WTC11 (cell line): ENCODE measurements at regions of chr15 and their contacts with region 1.

Region 1: DNA sequence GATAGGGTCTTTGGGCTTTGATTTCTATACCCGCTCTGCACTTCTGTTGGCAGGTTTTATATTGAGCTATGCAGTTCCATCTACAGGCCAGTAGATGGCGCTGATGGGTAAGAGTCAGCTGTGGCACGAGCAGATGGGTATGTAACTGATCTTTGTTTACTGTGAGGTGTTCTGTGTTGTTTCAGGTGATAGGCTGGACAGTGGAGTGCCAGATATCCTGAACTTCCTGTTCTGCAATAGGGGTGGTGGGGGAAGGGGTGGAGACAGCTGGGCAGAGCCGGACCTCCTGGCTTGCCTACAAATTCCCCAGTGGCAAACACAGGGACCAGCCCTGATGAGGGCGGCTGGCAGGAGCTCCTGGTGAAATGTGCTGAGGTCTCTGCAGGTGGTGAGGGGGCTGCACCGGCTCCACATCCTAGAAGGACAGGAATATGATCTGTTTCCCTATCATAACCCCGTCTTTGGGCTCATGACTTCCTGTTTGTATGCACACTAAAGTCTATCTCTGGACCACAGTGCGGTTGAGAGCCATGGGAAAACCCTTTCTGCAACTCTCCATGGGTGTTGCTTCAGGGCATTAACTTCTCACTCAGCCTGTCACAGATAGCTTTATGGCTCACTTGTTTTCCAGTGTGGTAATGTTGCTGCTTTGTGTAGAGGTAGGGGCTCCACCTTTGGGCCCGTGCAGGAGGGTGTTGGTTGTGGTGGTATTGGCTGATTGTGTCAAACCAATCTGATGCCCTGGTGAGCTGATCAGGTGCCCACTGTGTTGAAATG is 13.4 kb upstream of the FAM98B start:
- DNase-seq: peak; percentile 27
- ATAC-seq: peak; percentile 96
- H3K4me3 Mint-ChIP-seq: 0 out of 2 replicates have a peak overlapping the region, but pooled peaks have one; percentile 22
- H3K27ac Mint-ChIP-seq: no peak overlapping the region
- H3K4me1 Mint-ChIP-seq: peaks cover 7% of the 10 kb centered on the region; the same call in 1 of the 2 replicates
- H3K27me3 Mint-ChIP-seq: peaks cover 3% of the 10 kb centered on the region; the same call in 1 of the 2 replicates
- CTCF ChIP-seq: peak; percentile 91

Region 2: DNA sequence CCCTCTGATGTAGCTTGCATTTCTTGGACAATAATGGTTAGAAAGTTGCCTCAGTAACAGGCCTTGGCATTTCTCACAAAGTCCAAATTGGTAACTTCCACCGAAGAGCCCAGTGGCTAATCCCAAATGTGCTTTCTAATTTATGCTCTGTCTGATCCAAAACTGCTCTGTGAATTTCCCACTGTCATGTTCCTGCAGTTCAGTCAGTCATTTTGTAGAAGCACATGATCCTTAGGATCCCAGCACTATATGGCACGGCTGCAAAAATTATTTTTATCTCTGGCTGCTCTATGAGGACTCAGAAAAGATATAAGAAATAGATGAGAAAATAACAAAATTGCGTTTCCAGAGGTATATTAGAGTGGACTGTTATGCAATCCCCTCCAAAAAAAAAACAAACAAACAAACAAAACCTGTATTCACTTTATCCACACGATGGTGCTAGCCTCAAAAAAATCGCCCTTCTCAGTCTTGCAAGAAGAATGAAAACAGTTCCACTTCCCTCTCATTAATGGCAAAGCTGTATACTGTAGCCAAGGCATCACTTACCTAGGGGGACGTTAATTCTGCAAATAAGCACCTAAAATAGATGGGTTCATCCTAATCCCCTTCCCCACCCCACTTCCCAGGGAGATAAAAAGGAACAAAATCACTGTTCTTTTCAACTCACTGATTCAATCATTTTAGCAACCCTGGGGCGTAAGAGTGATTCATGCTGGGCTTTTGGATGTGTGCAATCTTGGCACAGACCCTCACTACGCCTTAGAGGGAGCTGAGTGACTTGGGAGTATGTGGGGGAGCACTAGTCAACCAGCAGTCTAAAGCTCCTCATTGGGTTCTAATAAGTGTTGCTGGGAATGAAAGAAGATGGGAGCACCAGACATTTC is 444.8 kb before region 1 on chr15:
- CTCF ChIA-PET with region 1: interaction called, 38 read pairs
- POLR2A ChIA-PET with region 1: no interaction called
- DNase-seq: no peak
- ATAC-seq: peak; percentile 85
- H3K4me3 Mint-ChIP-seq: no peak overlapping the region
- H3K27ac Mint-ChIP-seq: no peak overlapping the region
- H3K4me1 Mint-ChIP-seq: no peaks in the 10 kb centered on the region
- H3K27me3 Mint-ChIP-seq: no peaks in the 10 kb centered on the region
- CTCF ChIP-seq: peak; percentile 29

Region 3: DNA sequence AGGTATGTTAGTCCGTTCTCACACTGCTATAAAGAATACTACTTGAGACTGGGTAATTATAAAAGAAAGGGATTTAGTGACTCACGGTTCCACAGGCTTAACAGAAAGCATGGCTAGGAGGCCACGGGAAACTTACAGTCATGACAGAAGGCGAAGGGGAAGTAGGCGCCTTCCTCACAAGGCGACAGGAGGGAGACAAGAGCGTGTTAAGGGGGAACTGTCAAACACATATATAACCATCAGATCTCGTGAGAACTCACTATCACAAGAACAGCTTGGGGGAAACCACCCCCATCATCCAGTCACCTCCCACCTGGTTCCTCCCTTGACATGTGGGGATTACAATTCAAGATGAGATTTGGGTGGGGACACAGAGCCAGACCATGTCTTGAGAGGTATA is 157.5 kb before region 1 on chr15:
- CTCF ChIA-PET with region 1: no interaction called
- POLR2A ChIA-PET with region 1: no interaction called
- DNase-seq: no peak
- ATAC-seq: no peak; the same call in 1 of the 2 replicates
- H3K4me3 Mint-ChIP-seq: no peak overlapping the region
- H3K27ac Mint-ChIP-seq: no peak overlapping the region
- H3K4me1 Mint-ChIP-seq: peaks cover 50% of the 10 kb centered on the region
- H3K27me3 Mint-ChIP-seq: no peaks in the 10 kb centered on the region
- CTCF ChIP-seq: no peak

Region 4: DNA sequence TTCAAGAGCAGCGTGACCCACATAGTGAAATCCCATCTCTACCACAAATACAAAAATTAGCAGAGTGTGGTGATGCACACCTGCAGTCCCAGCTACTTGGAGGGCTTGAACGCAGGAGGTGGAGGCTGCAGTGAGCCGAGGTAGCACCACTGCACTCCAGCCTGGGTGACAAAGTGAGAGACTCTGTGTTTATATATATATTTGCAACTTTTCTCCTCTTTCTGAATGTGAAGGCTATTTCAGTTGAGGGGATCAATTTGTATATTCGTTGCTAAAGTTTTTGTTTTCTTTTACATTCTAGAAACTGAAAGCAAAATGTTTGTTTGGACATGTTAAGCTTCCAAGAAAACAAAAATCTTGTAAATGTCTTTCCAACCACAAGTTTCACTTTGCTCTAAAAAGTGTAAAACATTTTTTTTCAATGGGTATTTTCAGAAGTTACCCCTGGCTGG is 16.4 kb before region 1 on chr15:
- CTCF ChIA-PET with region 1: interaction called, 34 read pairs
- POLR2A ChIA-PET with region 1: no interaction called
- DNase-seq: no peak
- ATAC-seq: no peak
- H3K4me3 Mint-ChIP-seq: no peak overlapping the region
- H3K27ac Mint-ChIP-seq: no peak overlapping the region
- H3K4me1 Mint-ChIP-seq: no peaks in the 10 kb centered on the region
- H3K27me3 Mint-ChIP-seq: no peaks in the 10 kb centered on the region
- CTCF ChIP-seq: no peak

Region 5: DNA sequence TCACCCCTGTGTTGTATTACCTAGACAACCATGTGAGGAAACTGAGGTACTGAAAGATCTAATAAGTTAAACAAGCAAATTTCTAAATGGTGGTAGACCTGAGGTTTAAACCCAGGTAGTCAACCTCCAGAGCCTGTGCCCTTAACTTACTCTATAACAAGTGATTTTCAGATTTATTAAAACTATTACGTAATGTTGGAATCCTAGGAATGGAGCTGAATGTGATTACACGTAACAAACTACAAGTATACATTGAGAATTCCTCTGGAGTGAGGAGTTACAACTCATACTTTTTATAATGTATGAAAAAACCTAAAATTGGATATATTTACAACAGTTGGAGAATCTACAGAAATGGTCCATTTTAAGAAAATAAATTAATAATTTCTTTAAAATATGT is 31.4 kb after region 1 on chr15:
- CTCF ChIA-PET with region 1: interaction called, 11 read pairs
- POLR2A ChIA-PET with region 1: no interaction called
- DNase-seq: no peak
- ATAC-seq: no peak
- H3K4me3 Mint-ChIP-seq: no peak overlapping the region
- H3K27ac Mint-ChIP-seq: no peak overlapping the region
- H3K4me1 Mint-ChIP-seq: no peaks in the 10 kb centered on the region
- H3K27me3 Mint-ChIP-seq: no peaks in the 10 kb centered on the region
- CTCF ChIP-seq: no peak

Region 6: DNA sequence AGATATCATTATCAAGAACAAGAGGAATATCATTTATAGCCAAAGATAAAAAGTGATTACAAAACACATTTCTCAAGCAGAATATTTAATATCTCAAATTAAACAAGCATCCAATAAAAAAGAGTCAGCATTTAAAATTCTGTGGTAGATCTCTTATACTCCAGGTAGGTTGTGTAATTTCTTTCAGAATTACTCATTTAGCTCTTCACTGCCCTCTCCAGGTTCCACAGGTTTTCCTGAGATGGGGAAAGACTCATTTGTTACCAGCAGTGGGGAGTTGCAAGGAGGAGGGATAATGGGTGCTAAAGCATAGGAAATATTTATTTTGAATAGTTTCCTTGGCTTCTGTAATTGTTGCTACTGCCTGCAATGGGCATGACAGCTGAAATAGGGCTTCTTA is 207.1 kb after region 1 on chr15:
- CTCF ChIA-PET with region 1: interaction called, 10 read pairs
- POLR2A ChIA-PET with region 1: no interaction called
- DNase-seq: no peak
- ATAC-seq: peak; percentile 71
- H3K4me3 Mint-ChIP-seq: no peak overlapping the region
- H3K27ac Mint-ChIP-seq: no peak overlapping the region
- H3K4me1 Mint-ChIP-seq: peaks cover 14% of the 10 kb centered on the region
- H3K27me3 Mint-ChIP-seq: peaks cover under 1% of the 10 kb centered on the region; the same call in 1 of the 2 replicates
- CTCF ChIP-seq: no peak

Region 7: GRCh38 chr15:38690689-38691332 is 250.3 kb after region 1 on chr15:
- CTCF ChIA-PET with region 1: interaction called, 82 read pairs
- POLR2A ChIA-PET with region 1: no interaction called
- DNase-seq: peak; percentile 76
- ATAC-seq: peak; percentile 85
- H3K4me3 Mint-ChIP-seq: no peak overlapping the region
- H3K27ac Mint-ChIP-seq: no peak overlapping the region
- H3K4me1 Mint-ChIP-seq: peaks cover 15% of the 10 kb centered on the region
- H3K27me3 Mint-ChIP-seq: no peaks in the 10 kb centered on the region
- CTCF ChIP-seq: peak; percentile 78